IMR-90 (cell line): ENCODE measurements at regions of chr17 and their contacts with region 1.

Region 1: GRCh38 chr17:73371285-73371684 is 59.5 kb upstream of the CDC42EP4 start:
- DNase-seq: peak; percentile 92
- ATAC-seq: peak; percentile 64
- H3K4me3 ChIP-seq: no peak overlapping the region
- H3K27ac ChIP-seq: no peak overlapping the region
- H3K4me1 ChIP-seq: peaks cover 2% of the 10 kb centered on the region; the same call in 1 of the 2 replicates
- H3K27me3 ChIP-seq: peaks cover 20% of the 10 kb centered on the region
- CTCF ChIP-seq: no peak
- POLR2A ChIP-seq: no peak
- RAD21 ChIP-seq: no peak

Region 2: GRCh38 chr17:73192894-73193701 is 178.2 kb before region 1 on chr17 and contains the start of gene COG1:
- CTCF ChIA-PET with region 1: interaction called, 5 read pairs
- POLR2A ChIA-PET with region 1: no interaction called
- dilution Hi-C with region 1: no loop called
- in situ Hi-C with region 1: no loop called
- intact Hi-C with region 1: loop called (anchors 1 kb)
- DNase-seq: peak; percentile 84
- ATAC-seq: peak; percentile 89
- H3K4me3 ChIP-seq: peak within 1 kb of the TSS; percentile 99
- H3K27ac ChIP-seq: peak within 1 kb of the TSS; percentile 93
- H3K4me1 ChIP-seq: peaks cover 5% of the 10 kb centered on the region
- H3K27me3 ChIP-seq: no peaks in the 10 kb centered on the region
- CTCF ChIP-seq: 0 out of 2 replicates have a peak, but pooled peaks have one; percentile 4
- POLR2A ChIP-seq: peak; percentile 88
- RAD21 ChIP-seq: no peak
- total RNA-seq, gene COG1: 14.4 and 18.3 TPM in 2 replicates

Region 3: DNA sequence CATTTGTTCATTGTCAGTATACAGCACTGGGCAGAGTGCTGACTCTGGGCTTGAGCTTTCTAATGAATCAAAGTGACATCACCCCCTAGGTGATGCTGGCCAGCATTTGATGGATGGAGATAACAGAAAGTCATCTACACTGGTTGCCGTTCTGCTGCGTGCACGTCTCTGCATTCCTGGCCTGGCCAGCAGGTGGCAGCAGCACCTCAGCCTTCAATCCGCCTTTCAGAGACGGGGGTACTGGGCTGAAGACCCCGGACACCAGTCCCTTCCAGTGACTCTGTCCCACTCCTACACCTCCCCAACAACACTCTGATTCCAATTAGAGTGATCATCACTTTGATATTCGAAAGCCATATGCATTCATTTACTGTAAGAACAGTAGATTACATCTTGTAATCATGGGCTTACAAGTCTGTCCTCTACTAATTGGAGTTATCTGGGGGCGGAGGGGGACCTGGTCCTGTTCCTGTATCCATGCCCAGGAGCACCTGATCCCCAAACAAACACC is 115.6 kb before region 1 on chr17:
- CTCF ChIA-PET with region 1: interaction called, 37 read pairs
- POLR2A ChIA-PET with region 1: no interaction called
- dilution Hi-C with region 1: no loop called
- in situ Hi-C with region 1: loop called (anchors 5 kb)
- intact Hi-C with region 1: loop called (anchors 1 kb)
- DNase-seq: peak; percentile 24
- ATAC-seq: peak; percentile 87
- H3K4me3 ChIP-seq: no peak overlapping the region
- H3K27ac ChIP-seq: no peak overlapping the region
- H3K4me1 ChIP-seq: no peaks in the 10 kb centered on the region
- H3K27me3 ChIP-seq: no peaks in the 10 kb centered on the region
- CTCF ChIP-seq: peak; percentile 95
- POLR2A ChIP-seq: 0 out of 2 replicates have a peak, but pooled peaks have one; percentile 38
- RAD21 ChIP-seq: peak; percentile 99

Region 4: DNA sequence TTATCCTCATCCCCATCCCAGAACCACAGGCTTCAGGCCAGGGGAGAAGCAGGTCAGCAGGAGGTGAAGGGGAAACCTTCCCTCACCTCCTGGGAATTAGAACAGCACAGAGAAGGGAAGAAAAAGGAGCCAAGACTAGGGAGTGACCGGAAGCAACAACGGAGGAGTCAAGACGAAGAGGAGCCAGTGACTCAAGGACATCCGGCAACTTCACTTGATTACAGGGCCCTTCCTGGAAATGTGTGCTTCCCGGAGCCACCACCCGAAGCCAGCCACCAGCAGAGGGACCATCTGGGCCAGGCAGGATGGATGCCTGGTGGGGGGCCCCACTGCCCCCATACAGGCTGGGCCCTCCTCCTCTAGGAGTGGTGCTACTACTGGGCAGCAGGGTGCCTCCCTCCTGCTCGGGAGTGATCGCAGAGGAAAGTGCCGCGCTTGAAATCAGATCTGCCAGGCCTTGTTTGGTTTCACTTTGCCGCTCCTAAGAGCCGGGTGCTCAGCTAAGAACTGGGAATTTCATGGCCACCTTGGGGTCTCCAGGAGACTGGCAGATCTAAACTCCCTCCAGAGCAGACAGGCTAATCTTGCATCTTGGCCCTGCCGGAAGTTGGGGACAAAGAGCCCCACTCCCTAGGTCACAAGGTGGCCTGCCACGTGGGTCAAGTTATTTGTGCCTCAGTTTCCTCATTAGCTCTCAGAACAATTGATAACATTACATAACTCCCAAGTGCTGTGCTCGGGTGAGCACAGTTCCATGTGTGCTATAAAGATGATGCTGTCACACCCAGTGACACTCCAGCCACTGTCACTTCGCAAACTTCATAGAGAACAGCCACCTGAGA is 66.1 kb before region 1 on chr17:
- CTCF ChIA-PET with region 1: interaction called, 13 read pairs
- POLR2A ChIA-PET with region 1: no interaction called
- dilution Hi-C with region 1: no loop called
- in situ Hi-C with region 1: loop called (anchors 5 kb)
- intact Hi-C with region 1: no loop called
- DNase-seq: peak; percentile 78
- ATAC-seq: peak; percentile 62
- H3K4me3 ChIP-seq: peak overlapping the region; percentile 5
- H3K27ac ChIP-seq: peak overlapping the region; percentile 90
- H3K4me1 ChIP-seq: peaks cover 37% of the 10 kb centered on the region
- H3K27me3 ChIP-seq: no peaks in the 10 kb centered on the region
- CTCF ChIP-seq: peak; percentile 43
- POLR2A ChIP-seq: no peak
- RAD21 ChIP-seq: peak; percentile 45

Region 5: DNA sequence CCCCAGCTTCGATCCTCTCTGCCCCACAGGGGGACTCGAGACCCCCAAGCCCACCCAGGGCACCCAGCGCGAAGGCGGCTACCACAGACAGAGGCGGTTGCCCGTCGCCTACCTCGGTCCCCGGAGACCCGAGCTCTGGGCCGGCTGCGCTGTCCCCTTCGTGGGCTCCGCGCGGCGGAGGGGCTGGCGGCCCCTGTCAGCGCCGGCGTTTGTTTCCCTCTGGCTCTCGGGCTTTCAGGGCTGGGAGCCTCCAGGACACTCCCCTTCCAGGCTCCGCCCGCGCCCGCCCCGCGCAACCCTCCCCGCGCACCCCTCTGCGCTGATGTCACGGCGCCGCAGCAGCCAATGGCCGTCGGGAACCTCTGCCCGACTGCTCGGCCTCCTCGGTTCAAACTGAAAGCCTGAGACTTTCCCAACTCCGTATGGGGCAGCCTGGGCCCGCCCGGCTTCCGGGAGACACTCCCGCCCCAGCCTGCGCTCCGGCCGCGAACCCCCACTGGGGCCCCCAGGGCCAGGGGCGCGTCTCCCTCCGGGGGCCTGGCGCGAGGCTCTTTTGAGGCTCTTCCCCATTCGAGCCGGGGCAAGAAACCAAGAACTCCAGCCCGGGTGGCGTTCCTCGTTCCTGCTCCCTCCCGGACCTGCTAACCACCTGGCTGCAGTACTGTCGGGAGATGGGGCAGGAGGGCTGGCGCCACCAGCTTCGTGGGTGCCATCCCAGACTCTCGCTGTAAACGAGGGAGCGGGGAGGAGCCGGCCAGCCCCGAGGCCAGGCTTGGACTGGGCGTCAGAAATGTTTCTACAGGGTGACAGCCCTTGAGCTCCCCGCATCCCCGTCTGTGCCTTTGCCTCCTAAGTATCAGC is 59.3 kb before region 1 on chr17 and contains the start of gene CDC42EP4:
- CTCF ChIA-PET with region 1: interaction called, 13 read pairs
- POLR2A ChIA-PET with region 1: no interaction called
- dilution Hi-C with region 1: no loop called
- in situ Hi-C with region 1: loop called (anchors 5 kb)
- intact Hi-C with region 1: loop called (anchors 1 kb)
- DNase-seq: peak; percentile 91
- ATAC-seq: peak; percentile 89
- H3K4me3 ChIP-seq: peak within 1 kb of the TSS; percentile 76
- H3K27ac ChIP-seq: peak within 1 kb of the TSS; percentile 99
- H3K4me1 ChIP-seq: peaks cover 15% of the 10 kb centered on the region
- H3K27me3 ChIP-seq: no peaks in the 10 kb centered on the region
- CTCF ChIP-seq: no peak
- POLR2A ChIP-seq: peak; percentile 91
- RAD21 ChIP-seq: no peak
- total RNA-seq, gene CDC42EP4: 14.3 and 16.1 TPM in 2 replicates

Region 6: GRCh38 chr17:73610331-73610911 is 239.1 kb after region 1 on chr17:
- CTCF ChIA-PET with region 1: no interaction called
- POLR2A ChIA-PET with region 1: no interaction called
- dilution Hi-C with region 1: no loop called
- in situ Hi-C with region 1: no loop called
- intact Hi-C with region 1: no loop called
- DNase-seq: no peak
- ATAC-seq: no peak
- H3K4me3 ChIP-seq: no peak overlapping the region
- H3K27ac ChIP-seq: no peak overlapping the region
- H3K4me1 ChIP-seq: no peaks in the 10 kb centered on the region
- H3K27me3 ChIP-seq: no peaks in the 10 kb centered on the region
- CTCF ChIP-seq: no peak
- POLR2A ChIP-seq: no peak
- RAD21 ChIP-seq: no peak

Region 7: GRCh38 chr17:73855720-73856333 is 484.5 kb after region 1 on chr17:
- CTCF ChIA-PET with region 1: no interaction called
- POLR2A ChIA-PET with region 1: no interaction called
- dilution Hi-C with region 1: no loop called
- in situ Hi-C with region 1: no loop called
- intact Hi-C with region 1: no loop called
- DNase-seq: no peak
- ATAC-seq: no peak
- H3K4me3 ChIP-seq: no peak overlapping the region
- H3K27ac ChIP-seq: no peak overlapping the region
- H3K4me1 ChIP-seq: no peaks in the 10 kb centered on the region
- H3K27me3 ChIP-seq: no peaks in the 10 kb centered on the region
- CTCF ChIP-seq: no peak
- POLR2A ChIP-seq: no peak
- RAD21 ChIP-seq: no peak

Region 8: GRCh38 chr17:74176546-74177001 is 805.3 kb after region 1 on chr17:
- CTCF ChIA-PET with region 1: no interaction called
- POLR2A ChIA-PET with region 1: no interaction called
- dilution Hi-C with region 1: no loop called
- in situ Hi-C with region 1: no loop called
- intact Hi-C with region 1: loop called (anchors 5 kb)
- DNase-seq: peak; percentile 48
- ATAC-seq: peak; percentile 97
- H3K4me3 ChIP-seq: no peak overlapping the region
- H3K27ac ChIP-seq: no peak overlapping the region
- H3K4me1 ChIP-seq: no peaks in the 10 kb centered on the region
- H3K27me3 ChIP-seq: no peaks in the 10 kb centered on the region; the same call in 1 of the 2 replicates
- CTCF ChIP-seq: peak; percentile 84
- POLR2A ChIP-seq: no peak
- RAD21 ChIP-seq: peak; percentile 84